Mammary epithelial cell (primary cell): ENCODE measurements at regions of chr15 and their contacts with region 1.

Region 1: DNA sequence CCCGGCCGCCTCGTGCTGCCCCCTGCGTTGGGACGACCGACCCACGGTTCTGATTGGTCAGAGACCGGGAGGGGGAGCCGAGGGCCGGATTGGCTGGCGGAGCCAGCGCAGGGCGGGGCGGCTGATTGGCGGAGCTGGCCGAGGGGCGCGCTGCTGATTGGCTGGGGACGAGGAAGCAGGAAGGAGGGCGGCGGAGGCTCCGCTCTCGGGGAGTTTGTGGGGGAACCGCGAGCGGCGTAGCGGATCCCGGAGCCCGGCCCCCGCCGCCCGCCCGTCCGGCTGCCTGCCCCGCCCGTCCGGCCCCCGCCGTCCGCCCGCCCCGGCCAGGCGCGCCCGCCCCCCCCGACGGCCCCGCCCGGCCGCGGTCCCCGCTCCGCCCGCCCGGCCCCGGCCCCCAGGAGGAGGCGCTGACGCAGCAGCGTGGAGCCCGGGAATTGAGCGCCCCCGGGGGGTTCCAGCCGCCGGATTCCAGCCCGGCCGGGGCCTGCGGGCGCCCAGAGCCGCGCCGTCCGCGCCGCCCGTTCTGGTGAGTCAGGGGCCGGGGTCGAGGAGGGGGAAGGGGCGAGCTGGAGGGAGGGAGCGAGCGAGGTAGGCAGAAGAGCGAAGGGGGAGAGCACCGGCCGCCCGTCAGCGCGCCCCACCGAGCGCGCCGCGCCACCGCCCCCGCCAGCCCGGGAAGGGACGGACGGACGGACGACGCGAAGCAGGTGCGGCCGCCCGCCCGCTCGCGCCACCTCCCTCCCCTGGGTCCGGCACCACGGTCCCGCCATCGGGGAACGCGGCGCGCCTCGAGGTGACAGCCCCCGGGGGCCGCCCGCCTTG is at the start of gene BAHD1:
- DNase-seq: peak; percentile 89
- H3K4me3 ChIP-seq: peak within 1 kb of the TSS; percentile 57 to 69 (median 60)
- H3K27ac ChIP-seq: no peak within 1 kb of the TSS
- H3K4me1 ChIP-seq: peaks cover 25% of the 10 kb centered on the region
- H3K27me3 ChIP-seq: peaks cover 14% of the 10 kb centered on the region
- CTCF ChIP-seq: peak in 1 of 2 donors; percentile 16
- total RNA-seq, gene BAHD1: 11.7 to 13.7 TPM

Region 2: GRCh38 chr15:40477642-40478327 is 36.8 kb after region 1 on chr15:
- CTCF ChIA-PET with region 1: no interaction called
- dilution Hi-C with region 1: no loop called
- in situ Hi-C with region 1: no loop called
- intact Hi-C with region 1: no loop called
- DNase-seq: no peak
- H3K4me3 ChIP-seq: no peak overlapping the region
- H3K27ac ChIP-seq: no peak overlapping the region
- H3K4me1 ChIP-seq: no peaks in the 10 kb centered on the region
- H3K27me3 ChIP-seq: no peaks in the 10 kb centered on the region
- CTCF ChIP-seq: no peak

Region 3: DNA sequence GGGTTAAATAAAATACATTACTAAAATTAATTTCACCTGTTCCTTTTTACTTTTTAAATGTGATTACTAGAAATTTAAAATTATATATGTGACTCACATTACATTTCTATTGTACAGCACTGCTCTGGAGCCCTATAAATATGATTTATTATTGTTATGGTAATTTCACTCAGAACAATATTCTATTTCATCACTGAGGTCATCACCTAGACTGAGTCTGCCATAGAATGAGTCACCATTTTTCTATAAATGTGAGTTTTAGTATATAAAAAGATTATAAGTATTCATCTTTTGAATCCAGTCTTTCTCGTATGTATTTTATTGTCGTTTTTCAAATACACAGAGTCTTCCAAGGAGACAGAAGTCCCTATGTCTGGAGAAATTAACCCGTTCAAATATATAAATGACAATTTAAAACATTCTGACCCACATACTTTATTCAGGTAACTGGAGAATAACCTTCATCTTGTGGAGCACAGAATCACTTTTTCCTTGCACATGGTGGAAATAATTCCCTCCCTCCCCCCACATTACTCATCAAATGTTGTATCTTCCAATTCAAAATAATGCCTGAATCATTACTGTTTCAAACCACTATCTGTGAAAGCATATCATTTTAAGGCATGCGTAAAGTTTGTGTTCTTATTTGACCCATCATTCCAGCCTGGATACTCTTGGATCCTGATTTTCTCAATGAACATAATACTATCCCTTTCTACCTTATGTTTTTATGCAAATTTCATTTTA is 59.8 kb after region 1 on chr15:
- CTCF ChIA-PET with region 1: interaction called, 9 read pairs
- dilution Hi-C with region 1: loop called (anchors 5 kb)
- in situ Hi-C with region 1: no loop called
- intact Hi-C with region 1: no loop called
- DNase-seq: peak; percentile 29
- H3K4me3 ChIP-seq: no peak overlapping the region
- H3K27ac ChIP-seq: no peak overlapping the region
- H3K4me1 ChIP-seq: peaks cover 11% of the 10 kb centered on the region
- H3K27me3 ChIP-seq: no peaks in the 10 kb centered on the region
- CTCF ChIP-seq: no peak

Region 4: DNA sequence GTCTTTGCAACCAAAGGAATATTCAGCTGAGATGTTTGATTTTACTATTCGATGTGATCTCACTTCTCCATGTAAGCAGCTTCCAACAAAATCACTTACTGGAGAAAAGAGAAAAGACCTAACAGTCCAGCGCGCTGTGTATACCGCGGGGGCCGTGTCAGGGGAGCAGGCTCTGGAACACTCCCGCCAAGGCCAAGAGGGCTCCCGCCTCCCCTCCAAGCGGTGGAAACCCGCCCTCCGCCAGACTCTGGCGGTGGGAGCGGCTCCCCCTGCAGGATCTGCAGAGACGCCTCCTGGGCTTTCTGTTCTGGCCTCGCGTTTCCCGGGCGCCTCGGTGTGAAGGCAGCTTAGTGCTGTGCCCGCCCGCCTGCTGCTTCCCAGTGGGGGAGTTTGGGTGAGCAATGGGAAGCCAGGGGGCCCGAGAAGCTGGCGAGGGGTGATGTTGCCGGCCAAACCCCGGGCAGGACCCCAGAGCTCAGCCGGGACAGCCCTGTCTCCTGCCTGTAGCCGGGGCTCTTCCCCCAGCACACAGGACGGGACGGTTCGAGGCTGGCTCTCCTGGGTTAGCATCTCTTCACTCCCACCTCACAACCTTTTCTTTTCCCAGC is 66.1 kb after region 1 on chr15:
- CTCF ChIA-PET with region 1: interaction called, 9 read pairs
- dilution Hi-C with region 1: loop called (anchors 5 kb)
- in situ Hi-C with region 1: no loop called
- intact Hi-C with region 1: loop called (anchors 1 kb)
- DNase-seq: peak; percentile 52
- H3K4me3 ChIP-seq: peak overlapping the region in 1 of 3 experiments; percentile 22
- H3K27ac ChIP-seq: no peak overlapping the region
- H3K4me1 ChIP-seq: peaks cover 19% of the 10 kb centered on the region
- H3K27me3 ChIP-seq: no peaks in the 10 kb centered on the region
- CTCF ChIP-seq: peak; percentile 47 to 76

Region 5: GRCh38 chr15:40564591-40565332 is 123.8 kb after region 1 on chr15 and contains the start of gene CCDC32:
- CTCF ChIA-PET with region 1: no interaction called
- dilution Hi-C with region 1: no loop called
- in situ Hi-C with region 1: no loop called
- intact Hi-C with region 1: loop called (anchors 2 kb)
- DNase-seq: peak; percentile 99
- H3K4me3 ChIP-seq: peak within 1 kb of the TSS; percentile 72 to 91 (median 85)
- H3K27ac ChIP-seq: peak within 1 kb of the TSS; percentile 81
- H3K4me1 ChIP-seq: peaks cover 13% of the 10 kb centered on the region
- H3K27me3 ChIP-seq: no peaks in the 10 kb centered on the region
- CTCF ChIP-seq: no peak
- total RNA-seq, gene CCDC32: 17.3 to 25.8 TPM

Region 6: DNA sequence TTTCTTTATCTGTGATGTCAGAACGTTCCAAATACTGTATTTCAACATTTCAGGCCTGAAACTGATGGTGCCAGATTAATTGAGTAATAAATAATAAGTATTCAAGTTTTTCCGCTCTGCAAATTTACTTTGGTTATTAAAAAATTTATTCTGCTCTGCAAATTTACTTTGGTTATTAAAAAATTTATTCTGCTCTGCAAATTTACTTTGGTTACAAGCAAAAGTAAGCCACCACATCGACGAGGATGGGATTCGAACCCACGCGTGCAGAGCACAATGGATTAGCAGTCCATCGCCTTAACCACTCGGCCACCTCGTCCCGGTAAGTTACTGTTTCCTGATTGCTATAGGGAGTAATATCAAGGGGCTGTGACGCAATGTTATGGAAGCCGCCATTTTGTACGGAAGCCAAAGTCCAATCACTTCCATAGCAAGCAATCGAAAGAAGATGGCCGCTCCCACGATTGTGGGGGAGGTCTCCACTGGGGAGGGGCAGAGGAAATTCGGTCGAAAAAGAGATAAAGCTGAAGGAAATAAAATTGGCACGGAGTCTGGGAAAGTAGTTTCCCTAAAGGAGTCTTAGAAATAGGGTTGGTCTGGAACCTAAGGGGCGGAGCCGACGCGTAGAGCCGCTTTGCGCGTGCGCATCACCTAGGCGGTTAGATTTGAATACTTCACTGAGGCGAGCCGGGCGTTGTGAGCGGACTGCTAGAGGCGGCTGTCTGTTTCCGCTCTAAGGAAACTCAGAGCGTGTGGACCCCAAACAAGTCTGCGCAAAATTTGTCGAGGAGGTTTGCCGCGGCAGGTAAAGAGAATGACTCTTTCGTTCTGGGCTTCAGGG is 152.9 kb after region 1 on chr15 and contains the start of gene KNL1:
- CTCF ChIA-PET with region 1: no interaction called
- dilution Hi-C with region 1: no loop called
- in situ Hi-C with region 1: no loop called
- intact Hi-C with region 1: loop called (anchors 5 kb)
- DNase-seq: peak; percentile 93
- H3K4me3 ChIP-seq: peak within 1 kb of the TSS; percentile 70 to 80 (median 76)
- H3K27ac ChIP-seq: peak within 1 kb of the TSS; percentile 88
- H3K4me1 ChIP-seq: peaks cover 11% of the 10 kb centered on the region
- H3K27me3 ChIP-seq: no peaks in the 10 kb centered on the region
- CTCF ChIP-seq: no peak
- total RNA-seq, gene KNL1: 1.8 to 21.3 TPM

Region 7: DNA sequence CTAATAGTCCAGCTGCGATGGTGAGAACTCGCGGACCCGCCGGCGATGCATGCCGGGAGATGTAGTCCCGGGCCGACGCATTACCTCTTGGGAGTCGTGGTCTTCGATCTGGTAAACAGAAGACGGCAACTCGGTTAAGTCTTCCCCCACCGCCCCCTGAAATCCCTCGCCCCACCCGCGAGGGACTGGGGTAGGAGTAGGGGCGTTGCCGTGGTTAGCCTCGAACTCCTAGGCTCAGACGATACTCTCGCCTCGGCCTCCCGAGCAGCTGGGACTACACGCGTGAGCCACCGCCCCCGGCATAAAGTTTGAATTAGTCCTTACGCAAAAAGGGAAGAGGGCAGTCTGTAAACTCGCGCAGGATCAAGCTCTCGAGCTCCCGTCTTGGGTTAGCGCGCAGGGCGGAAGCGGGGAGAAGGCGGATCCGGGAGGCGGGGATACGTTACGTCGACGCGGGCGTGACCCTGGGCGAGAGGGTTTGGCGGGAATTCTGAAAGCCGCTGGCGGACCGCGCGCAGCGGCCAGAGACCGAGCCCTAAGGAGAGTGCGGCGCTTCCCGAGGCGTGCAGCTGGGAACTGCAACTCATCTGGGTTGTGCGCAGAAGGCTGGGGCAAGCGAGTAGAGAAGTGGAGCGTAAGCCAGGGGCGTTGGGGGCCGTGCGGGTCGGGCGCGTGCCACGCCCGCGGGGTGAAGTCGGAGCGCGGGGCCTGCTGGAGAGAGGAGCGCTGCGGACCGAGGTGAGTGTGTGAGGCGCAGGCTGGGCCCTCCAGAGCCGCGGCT is 253.9 kb after region 1 on chr15 and contains the start of gene RAD51:
- CTCF ChIA-PET with region 1: no interaction called
- dilution Hi-C with region 1: no loop called
- in situ Hi-C with region 1: no loop called
- intact Hi-C with region 1: loop called (anchors 10 kb)
- DNase-seq: peak; percentile 95
- H3K4me3 ChIP-seq: peak within 1 kb of the TSS; percentile 66 to 97 (median 75)
- H3K27ac ChIP-seq: peak within 1 kb of the TSS; percentile 91
- H3K4me1 ChIP-seq: peaks cover 8% of the 10 kb centered on the region
- H3K27me3 ChIP-seq: no peaks in the 10 kb centered on the region
- CTCF ChIP-seq: no peak
- total RNA-seq, gene RAD51: 1.5 to 22.6 TPM

Region 8: DNA sequence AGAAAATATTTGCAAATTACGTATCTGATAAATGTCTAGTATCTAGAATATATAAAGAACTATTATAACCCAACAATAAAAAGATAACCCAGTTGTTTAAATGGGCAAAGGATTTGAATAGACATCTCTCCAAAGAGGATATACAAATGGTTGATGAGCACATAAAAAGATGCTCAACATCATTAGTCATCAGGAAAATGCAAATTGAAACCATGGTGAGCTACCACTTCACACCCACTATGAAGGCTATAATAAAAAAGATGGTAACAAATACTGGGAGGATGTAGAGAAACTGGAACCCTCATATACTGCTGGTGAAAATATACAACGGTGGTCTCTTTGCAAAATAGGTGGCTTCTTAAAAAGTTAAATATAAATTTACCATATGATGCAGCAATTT is 282.0 kb after region 1 on chr15:
- CTCF ChIA-PET with region 1: no interaction called
- dilution Hi-C with region 1: no loop called
- in situ Hi-C with region 1: no loop called
- intact Hi-C with region 1: no loop called
- DNase-seq: no peak
- H3K4me3 ChIP-seq: no peak overlapping the region
- H3K27ac ChIP-seq: no peak overlapping the region
- H3K4me1 ChIP-seq: no peaks in the 10 kb centered on the region
- H3K27me3 ChIP-seq: no peaks in the 10 kb centered on the region
- CTCF ChIP-seq: no peak